ENCODE measurements at regions of chr11 and their contacts with region 1.

Region 1: DNA sequence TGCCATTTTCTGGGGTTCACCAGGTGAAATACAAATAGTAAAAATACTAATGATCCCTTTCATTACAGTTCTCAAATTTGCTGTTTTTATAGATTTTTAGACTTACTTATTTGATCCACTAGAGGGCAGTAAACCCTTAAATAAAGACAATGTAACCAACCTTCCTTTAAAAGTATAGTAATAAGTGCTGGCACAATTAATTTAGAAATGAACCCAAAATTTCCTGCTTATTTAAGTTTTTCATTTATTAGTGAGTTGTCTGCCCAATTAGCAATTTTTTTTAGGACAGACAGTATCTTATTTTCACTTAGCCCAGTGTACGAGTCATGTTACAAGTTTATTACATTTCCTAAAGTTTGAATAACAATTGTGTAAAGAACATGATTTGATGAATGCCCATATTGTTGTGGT is 4.7 kb downstream of the DDIAS start:
- DNase-seq: no peak
- H3K4me3 ChIP-seq: no peak overlapping the region
- H3K27ac ChIP-seq: no peak overlapping the region
- H3K4me1 ChIP-seq: no peaks in the 10 kb centered on the region
- H3K27me3 ChIP-seq: no peaks in the 10 kb centered on the region
- CTCF ChIP-seq: peak in 2 of 3 donors; percentile 21 to 33
- EP300 ChIP-seq: no peak
- POLR2A ChIP-seq: no peak

Region 2: GRCh38 chr11:83051760-83052671 is 145.8 kb after region 1 on chr11:
- intact Hi-C with region 1: no loop called
- DNase-seq: peak; percentile 41 to 64 (median 59)
- H3K4me3 ChIP-seq: no peak overlapping the region
- H3K27ac ChIP-seq: peak overlapping the region in 1 of 2 donors; percentile 53
- H3K4me1 ChIP-seq: peaks cover 16% of the 10 kb centered on the region
- H3K27me3 ChIP-seq: no peaks in the 10 kb centered on the region
- CTCF ChIP-seq: no peak
- EP300 ChIP-seq: peak; percentile 92
- POLR2A ChIP-seq: no peak

Region 3: DNA sequence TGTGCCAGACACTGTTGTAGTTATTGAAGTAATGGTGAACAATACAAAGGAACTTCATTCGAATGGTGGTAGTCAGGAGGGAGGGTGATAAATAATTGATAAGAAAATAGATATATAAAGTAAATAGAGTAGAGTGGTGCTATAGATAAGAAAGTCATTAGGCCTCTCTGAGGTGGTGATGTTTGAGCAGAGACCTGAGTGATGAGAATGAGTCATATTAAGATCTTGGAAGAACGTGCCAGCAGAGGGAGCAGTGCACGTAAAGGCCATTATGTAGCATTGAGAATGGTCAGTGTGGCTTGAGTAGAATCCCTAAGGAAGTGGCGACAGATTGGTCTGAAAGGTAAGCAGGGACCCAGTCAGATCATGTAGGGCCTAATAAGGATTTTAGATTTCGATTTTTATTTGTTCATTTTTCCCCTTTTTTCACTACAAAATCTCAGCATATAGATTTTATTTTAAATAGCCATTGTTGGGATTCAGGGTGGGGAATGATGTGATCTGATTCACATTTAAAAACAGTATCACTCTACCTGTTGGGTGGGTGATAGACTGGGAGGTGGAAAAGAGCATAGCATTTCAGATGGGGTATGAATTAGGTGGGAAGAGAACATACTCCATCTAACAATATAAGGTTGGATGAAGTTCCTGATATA is 335.2 kb after region 1 on chr11:
- intact Hi-C with region 1: loop called in 2 of 4 experiments (anchors 5 kb)
- DNase-seq: peak in 3 of 5 donors; percentile 14 to 49 (median 28)
- H3K4me3 ChIP-seq: no peak overlapping the region
- H3K27ac ChIP-seq: no peak overlapping the region
- H3K4me1 ChIP-seq: no peaks in the 10 kb centered on the region
- H3K27me3 ChIP-seq: no peaks in the 10 kb centered on the region
- CTCF ChIP-seq: peak in 1 of 3 donors; percentile 20
- EP300 ChIP-seq: no peak
- POLR2A ChIP-seq: no peak

Region 4: GRCh38 chr11:83249972-83250593 is 343.8 kb after region 1 on chr11:
- intact Hi-C with region 1: loop called in 2 of 4 experiments (anchors 5 to 10 kb)
- DNase-seq: no peak
- H3K4me3 ChIP-seq: no peak overlapping the region
- H3K27ac ChIP-seq: no peak overlapping the region
- H3K4me1 ChIP-seq: no peaks in the 10 kb centered on the region
- H3K27me3 ChIP-seq: no peaks in the 10 kb centered on the region
- CTCF ChIP-seq: peak in 2 of 3 donors; percentile 37 to 50
- EP300 ChIP-seq: no peak
- POLR2A ChIP-seq: no peak